ENCODE measurements at regions of chr13 and their contacts with region 1.

Region 1: DNA sequence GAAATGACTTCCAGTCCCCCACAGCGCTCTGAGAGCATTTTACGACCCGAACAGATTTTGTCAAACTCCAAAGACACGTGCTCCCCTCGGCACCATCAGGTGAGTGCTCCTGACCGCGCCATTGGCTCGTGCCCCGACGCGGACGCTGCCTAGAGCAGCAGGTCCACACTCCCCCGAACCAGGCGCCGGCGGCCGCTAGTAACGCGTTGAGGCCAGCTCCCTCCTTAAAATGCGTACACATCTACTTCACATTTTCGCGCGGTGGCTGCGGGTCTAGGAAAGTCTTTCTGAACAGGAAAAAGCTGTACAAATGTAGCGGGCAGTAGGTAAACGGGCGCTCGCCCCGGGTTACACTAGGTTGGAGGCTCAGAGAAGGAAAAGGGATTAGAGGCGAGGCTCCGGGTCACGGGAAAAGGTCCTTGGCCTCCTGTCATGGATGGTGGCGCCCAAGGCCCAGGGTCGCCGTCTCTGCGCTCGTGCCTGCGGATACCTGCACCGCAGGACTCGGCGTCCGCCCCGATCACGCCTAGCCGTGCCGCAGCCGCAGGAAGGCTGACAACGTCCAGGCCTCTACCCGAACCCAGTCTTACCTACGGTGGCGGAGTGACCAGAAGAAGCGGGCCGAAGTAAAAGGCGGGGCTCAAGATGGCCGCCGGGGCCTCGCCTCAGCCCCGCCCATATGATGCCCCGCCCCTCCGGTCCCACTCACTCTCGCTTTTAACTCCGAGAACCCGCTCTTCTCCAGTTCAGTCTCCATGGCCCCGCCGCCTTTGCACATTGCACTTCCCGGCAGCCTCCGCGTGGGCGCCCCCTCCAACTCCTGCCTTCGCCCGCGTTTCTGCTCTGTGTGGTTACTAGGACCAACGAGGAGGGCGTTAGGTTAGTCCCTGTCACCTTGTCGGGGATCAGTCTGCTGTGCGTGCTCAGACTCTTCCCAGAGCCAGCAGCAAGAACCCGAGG is at the start of gene ESD:
- DNase-seq: peak; percentile 66 to 97
- H3K4me3 ChIP-seq: peak within 1 kb of the TSS; percentile 77 to 86
- H3K27ac ChIP-seq: peak within 1 kb of the TSS; percentile 92
- H3K4me1 ChIP-seq: peaks cover 10 to 33% of the 10 kb centered on the region in 2 donors
- H3K27me3 ChIP-seq: no peaks in the 10 kb centered on the region
- CTCF ChIP-seq: no peak
- total RNA-seq, gene ESD: 58.0 TPM

Region 2: GRCh38 chr13:46052319-46053161 is 744.3 kb before region 1 on chr13 and contains the start of gene ZC3H13:
- intact Hi-C with region 1: loop called (anchors 5 kb)
- DNase-seq: peak; percentile 80 to 97
- H3K4me3 ChIP-seq: peak within 1 kb of the TSS; percentile 72 to 83
- H3K27ac ChIP-seq: peak within 1 kb of the TSS; percentile 90 to 94
- H3K4me1 ChIP-seq: peaks cover 2 to 18% of the 10 kb centered on the region in 2 donors
- H3K27me3 ChIP-seq: no peaks in the 10 kb centered on the region
- CTCF ChIP-seq: peak in 2 of 3 experiments; percentile 26 to 32
- total RNA-seq, gene ZC3H13: 25.8 TPM

Region 3: GRCh38 chr13:46369506-46370277 is 427.1 kb before region 1 on chr13:
- intact Hi-C with region 1: no loop called
- DNase-seq: peak in 1 of 2 donors; percentile 69
- H3K4me3 ChIP-seq: no peak overlapping the region
- H3K27ac ChIP-seq: peak overlapping the region; percentile 37 to 61
- H3K4me1 ChIP-seq: peaks cover 0 to 6% of the 10 kb centered on the region in 2 donors
- H3K27me3 ChIP-seq: no peaks in the 10 kb centered on the region
- CTCF ChIP-seq: no peak

Region 4: DNA sequence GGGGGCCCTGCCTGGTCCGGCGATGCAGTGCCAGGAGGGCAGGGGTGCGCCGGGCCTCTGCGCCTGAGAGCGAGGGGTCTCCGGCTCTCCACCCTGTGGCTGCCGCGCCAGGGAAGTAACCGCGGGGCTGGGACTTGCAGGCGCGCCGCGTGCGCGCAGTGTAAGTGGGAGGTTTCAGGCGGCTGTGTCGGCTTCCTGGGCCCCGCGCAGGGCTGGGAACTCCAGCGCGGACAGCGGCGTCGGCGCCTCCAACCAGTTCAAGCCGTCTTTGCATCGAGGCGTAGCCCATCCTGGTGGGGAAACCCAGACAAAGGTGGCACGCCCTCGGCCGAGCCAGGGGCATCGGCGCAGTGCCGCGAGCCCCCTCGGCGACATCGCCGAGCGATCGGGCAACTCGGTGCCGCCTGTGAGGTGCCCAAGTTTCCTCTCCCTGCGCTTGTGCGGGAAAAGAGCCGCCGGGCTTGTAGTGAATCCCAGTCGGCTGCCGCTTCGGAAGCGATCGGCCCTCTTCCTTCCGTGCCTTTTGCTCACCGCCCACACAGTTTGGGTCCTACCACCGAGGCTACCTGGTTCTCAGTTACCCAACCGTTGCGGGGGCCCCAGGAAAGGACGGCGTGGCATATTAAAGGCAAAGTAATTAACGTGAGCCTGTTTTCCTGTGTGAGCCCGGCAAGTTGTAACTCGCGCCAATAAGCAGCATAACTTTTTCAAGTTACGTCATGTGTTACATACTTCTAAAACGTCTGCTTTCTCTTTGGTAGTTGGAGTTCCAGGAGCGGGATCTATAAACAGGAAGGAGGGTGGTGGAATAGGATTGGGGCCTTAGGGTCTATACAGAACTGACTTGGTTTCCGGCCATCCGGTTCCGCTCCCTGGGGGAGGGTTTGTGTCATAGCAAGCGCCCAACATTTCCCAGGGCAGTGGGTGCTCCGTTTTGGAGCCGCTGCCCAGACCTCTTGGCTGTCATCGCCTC is 242.6 kb before region 1 on chr13:
- intact Hi-C with region 1: loop called (anchors 5 kb)
- DNase-seq: peak; percentile 28 to 86
- H3K4me3 ChIP-seq: peak overlapping the region; percentile 90 to 100
- H3K27ac ChIP-seq: peak overlapping the region; percentile 95 to 96
- H3K4me1 ChIP-seq: peaks cover 2 to 14% of the 10 kb centered on the region in 2 donors
- H3K27me3 ChIP-seq: no peaks in the 10 kb centered on the region
- CTCF ChIP-seq: peak in 2 of 3 experiments; percentile 30 to 38

Region 5: GRCh38 chr13:46775385-46776107 is 21.2 kb before region 1 on chr13:
- intact Hi-C with region 1: loop called (anchors 2 kb)
- DNase-seq: no peak
- H3K4me3 ChIP-seq: peak overlapping the region in 1 of 2 donors; percentile 20
- H3K27ac ChIP-seq: peak overlapping the region; percentile 63 to 84
- H3K4me1 ChIP-seq: peaks cover 0 to 53% of the 10 kb centered on the region in 2 donors
- H3K27me3 ChIP-seq: no peaks in the 10 kb centered on the region
- CTCF ChIP-seq: no peak

Region 6: GRCh38 chr13:47087841-47088240 is 291.0 kb after region 1 on chr13:
- intact Hi-C with region 1: loop called (anchors 10 kb)
- DNase-seq: no peak
- H3K4me3 ChIP-seq: no peak overlapping the region
- H3K27ac ChIP-seq: peak overlapping the region; percentile 43 to 44
- H3K4me1 ChIP-seq: peaks cover 0 to 6% of the 10 kb centered on the region in 2 donors
- H3K27me3 ChIP-seq: no peaks in the 10 kb centered on the region
- CTCF ChIP-seq: no peak